Cardiac septum (tissue), 1 donor: ENCODE measurements at regions of chr1 and their contacts with region 1.

Region 1: DNA sequence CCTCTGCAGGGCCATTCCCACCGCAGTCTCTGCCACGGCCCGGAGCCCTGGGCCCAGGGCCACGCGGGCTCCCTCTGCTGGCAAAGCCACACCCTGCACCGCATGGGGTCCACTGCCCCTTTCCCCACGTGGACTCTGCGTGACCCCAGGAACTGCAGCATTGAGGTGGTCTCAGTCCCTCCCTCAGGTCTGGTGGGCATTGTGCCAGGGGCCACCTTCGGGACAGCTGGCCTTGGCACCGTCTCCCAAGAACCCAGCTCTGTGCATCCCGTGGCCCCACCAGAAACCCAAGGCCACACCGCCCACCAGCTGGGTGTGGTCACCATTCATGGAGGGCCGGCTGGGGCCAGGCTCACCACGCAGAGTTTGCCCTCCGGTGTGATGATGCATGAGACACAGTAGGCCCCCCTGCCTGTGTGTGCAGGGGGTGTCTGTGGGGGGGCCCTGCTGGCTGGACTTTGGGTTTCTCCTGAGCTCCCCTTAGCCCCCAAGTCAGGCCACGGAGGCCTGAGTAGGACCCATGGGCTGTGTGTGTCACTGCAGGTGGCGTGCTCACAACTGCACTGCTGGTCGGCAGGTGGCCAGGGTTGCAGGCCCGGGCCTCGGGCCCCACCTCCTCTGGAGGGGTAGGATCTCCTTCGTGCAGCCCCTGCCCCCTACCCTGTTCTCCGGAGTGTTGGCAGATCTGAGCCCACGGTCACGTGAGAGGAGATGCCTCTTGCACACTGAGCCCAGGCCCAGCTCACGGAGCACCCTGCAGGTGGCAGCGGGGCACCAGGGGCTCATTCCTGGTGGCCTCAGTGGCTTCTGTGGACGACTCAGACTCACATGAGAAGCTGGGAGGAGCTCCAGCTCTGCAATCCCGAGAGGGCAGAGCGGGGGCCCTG is 5.8 kb downstream of the VWA1 start:
- DNase-seq: no peak

Region 2: DNA sequence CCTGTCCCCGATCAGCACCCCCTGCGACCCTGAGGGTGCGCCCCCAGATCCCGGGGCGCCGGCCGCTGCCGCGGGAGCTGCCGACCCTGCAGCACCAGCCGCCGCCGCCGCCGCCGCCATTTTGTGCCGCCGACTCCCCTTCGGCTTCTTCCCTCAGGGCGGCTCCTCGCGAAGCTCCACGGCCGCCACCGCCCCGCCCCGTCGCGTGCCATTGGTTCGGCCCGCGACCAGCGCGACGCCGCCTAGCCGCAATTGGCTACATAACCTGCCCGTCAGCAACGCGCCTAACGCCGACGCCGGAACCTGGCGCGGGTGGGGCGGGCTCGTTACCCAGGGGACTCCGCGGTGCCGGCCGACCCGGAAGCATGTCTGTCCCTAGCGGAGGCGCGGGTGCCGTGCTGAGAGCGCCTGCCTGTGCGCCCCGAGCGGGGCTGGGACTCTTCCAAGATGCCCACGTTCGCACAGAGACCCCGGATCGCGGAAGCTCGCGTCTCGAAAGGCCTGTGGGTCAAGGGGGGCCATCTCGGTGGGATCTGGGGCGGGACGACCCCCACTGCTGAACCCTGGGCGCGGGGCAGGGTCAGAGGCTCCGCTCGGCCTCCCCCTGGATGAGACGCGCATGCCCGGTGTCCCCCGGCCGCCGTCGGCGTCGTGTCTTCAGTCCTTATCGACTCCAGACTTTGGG is 41.9 kb before region 1 on chr1 and contains the start of gene CCNL2:
- intact Hi-C with region 1: loop called (anchors 5 kb)
- DNase-seq: peak; percentile 99
- total RNA-seq, gene CCNL2: 78.6 TPM